IMR-90 (cell line): ENCODE measurements at regions of chr16 and their contacts with region 1.

Region 1: DNA sequence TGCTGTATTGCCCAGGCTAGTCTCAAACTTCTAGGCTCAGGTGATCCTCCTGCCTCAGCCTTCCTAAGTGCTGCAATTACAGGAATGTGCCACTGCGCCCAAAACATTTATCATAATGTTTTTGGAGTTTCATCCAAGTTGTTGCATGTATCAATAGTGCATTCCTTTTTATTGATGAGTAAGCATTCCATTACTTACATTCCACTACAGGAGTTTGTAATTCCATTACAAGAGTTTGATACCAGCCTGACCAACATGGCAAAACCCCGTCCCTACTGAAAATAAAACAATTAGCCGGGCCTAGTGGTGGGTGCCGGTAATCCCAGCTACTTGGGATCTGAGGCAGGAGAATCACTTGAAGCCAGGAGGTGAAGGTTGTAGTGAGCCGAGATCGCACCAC is 216.5 kb downstream of the SNX29 start:
- DNase-seq: peak; percentile 25
- ATAC-seq: peak; percentile 78
- H3K4me3 ChIP-seq: no peak overlapping the region
- H3K27ac ChIP-seq: no peak overlapping the region
- H3K4me1 ChIP-seq: no peaks in the 10 kb centered on the region
- H3K27me3 ChIP-seq: no peaks in the 10 kb centered on the region
- CTCF ChIP-seq: 0 out of 2 replicates have a peak, but pooled peaks have one; percentile 1
- POLR2A ChIP-seq: no peak
- RAD21 ChIP-seq: no peak

Region 2: GRCh38 chr16:12178251-12178990 is 14.6 kb before region 1 on chr16:
- CTCF ChIA-PET with region 1: no interaction called
- POLR2A ChIA-PET with region 1: no interaction called
- dilution Hi-C with region 1: no loop called
- in situ Hi-C with region 1: no loop called
- intact Hi-C with region 1: no loop called
- DNase-seq: peak; percentile 83
- ATAC-seq: peak; percentile 93
- H3K4me3 ChIP-seq: no peak overlapping the region
- H3K27ac ChIP-seq: peak overlapping the region; percentile 39; the same call in 1 of the 2 replicates
- H3K4me1 ChIP-seq: peaks cover 8% of the 10 kb centered on the region
- H3K27me3 ChIP-seq: no peaks in the 10 kb centered on the region
- CTCF ChIP-seq: no peak
- POLR2A ChIP-seq: no peak
- RAD21 ChIP-seq: no peak

Region 3: GRCh38 chr16:12240036-12240435 is 47.0 kb after region 1 on chr16:
- CTCF ChIA-PET with region 1: no interaction called
- POLR2A ChIA-PET with region 1: no interaction called
- dilution Hi-C with region 1: no loop called
- in situ Hi-C with region 1: no loop called
- intact Hi-C with region 1: no loop called
- DNase-seq: peak; percentile 54
- ATAC-seq: peak; percentile 37; the same call in 1 of the 2 replicates
- H3K4me3 ChIP-seq: no peak overlapping the region
- H3K27ac ChIP-seq: no peak overlapping the region
- H3K4me1 ChIP-seq: peaks cover 2% of the 10 kb centered on the region
- H3K27me3 ChIP-seq: no peaks in the 10 kb centered on the region
- CTCF ChIP-seq: no peak
- POLR2A ChIP-seq: no peak
- RAD21 ChIP-seq: no peak

Region 4: DNA sequence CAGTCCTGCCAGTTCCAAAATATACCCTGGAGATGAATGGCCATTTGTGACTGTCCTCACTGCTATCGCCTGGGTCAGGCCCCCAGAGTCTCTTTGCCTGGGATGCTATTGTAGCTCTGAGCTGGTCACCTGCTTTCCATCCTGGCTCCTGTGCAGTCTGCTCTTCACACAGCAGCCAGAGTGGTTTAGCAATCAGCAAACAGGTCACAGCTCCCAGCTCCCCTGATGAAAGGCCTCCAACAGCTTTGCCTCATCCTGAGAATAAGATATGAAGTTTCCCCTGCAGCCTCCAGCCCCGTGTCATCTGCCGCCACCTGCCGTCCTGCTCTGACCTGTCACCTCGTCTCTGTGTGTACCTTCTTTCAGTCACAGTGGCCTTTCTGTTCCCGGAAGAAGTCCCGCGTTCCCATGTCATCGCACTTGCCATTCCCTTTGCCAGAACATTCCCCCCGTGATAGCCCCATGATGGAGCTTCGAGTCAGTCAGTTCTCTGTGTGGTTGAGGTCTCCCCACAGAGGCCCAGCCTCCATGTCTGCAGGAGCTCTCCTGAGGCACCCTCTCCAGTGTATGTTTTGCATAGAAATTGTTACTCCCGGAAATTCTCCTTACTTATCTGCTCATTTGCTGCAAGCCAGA is 65.0 kb after region 1 on chr16:
- CTCF ChIA-PET with region 1: no interaction called
- POLR2A ChIA-PET with region 1: no interaction called
- dilution Hi-C with region 1: no loop called
- in situ Hi-C with region 1: loop called (anchors 10 kb)
- intact Hi-C with region 1: no loop called
- DNase-seq: no peak
- ATAC-seq: no peak
- H3K4me3 ChIP-seq: no peak overlapping the region
- H3K27ac ChIP-seq: no peak overlapping the region
- H3K4me1 ChIP-seq: peaks cover 11% of the 10 kb centered on the region
- H3K27me3 ChIP-seq: no peaks in the 10 kb centered on the region
- CTCF ChIP-seq: 0 out of 2 replicates have a peak, but pooled peaks have one; percentile 6
- POLR2A ChIP-seq: no peak
- RAD21 ChIP-seq: no peak

Region 5: GRCh38 chr16:12386192-12386591 is 193.2 kb after region 1 on chr16:
- CTCF ChIA-PET with region 1: no interaction called
- POLR2A ChIA-PET with region 1: no interaction called
- dilution Hi-C with region 1: no loop called
- in situ Hi-C with region 1: no loop called
- intact Hi-C with region 1: no loop called
- DNase-seq: no peak
- ATAC-seq: no peak
- H3K4me3 ChIP-seq: no peak overlapping the region
- H3K27ac ChIP-seq: no peak overlapping the region
- H3K4me1 ChIP-seq: peaks cover 9% of the 10 kb centered on the region
- H3K27me3 ChIP-seq: no peaks in the 10 kb centered on the region
- CTCF ChIP-seq: no peak
- POLR2A ChIP-seq: no peak
- RAD21 ChIP-seq: no peak